Activated T-helper 2 cell treated with anti-CD3 and anti-CD28 coated beads, Interferon-gamma antibody, Interleukin-2, Interleukin-4, amounts not matched to agents 10 μg/mL and 5 μg/mL and 100 μg/mL, durations not matched to agents 14 hours and 24 hours and 36 hours (primary cell): ENCODE measurements at regions of chr4 and their contacts with region 1.

Region 1: DNA sequence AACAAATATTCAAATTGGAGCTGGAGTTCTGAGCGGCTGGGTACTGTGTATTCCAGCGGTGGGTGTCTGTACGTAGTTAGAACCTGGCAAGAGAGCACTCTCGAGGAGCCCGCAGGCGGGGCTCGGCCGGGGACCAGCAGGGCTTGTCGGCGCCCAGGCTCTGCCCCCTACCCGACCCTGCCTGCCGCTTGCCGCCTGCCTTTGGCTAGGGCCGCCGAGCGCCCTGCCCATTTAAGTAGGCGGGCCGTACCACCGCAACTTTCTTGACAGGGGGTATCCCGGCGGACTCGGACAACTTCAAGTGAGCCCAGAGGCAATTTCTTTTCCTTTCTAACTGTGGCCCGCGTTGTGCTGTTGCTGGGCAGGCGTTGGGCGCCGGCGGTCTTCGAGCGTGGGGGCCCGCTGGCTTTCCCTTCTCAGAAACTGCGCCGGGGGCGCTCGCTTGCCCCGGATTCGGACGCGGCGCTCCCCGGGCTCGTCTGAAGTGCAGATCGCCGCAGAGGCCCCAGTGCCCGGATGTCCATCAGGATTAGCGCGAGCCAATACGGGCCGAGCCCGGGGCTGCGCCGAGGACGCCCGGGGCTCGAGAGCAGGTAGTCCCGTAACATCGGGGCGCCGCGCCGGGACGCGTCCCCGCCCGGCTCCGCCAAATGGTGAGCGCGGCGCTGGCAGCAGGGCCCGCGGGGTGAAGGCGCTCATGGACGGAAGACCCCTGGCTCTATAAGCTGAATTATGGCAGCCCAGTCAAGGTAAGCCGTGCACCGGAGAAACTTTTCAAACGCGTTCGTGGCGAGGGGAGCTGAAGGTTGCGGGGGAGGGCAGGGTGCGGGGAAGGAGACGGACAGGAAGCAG is 72.1 kb downstream of the AFF1 start:
- DNase-seq: peak; percentile 89
- H3K4me3 Mint-ChIP-seq: peak overlapping the region; percentile 98
- H3K27ac Mint-ChIP-seq: peak overlapping the region; percentile 97
- H3K4me1 Mint-ChIP-seq: peaks cover 48% of the 10 kb centered on the region
- H3K27me3 Mint-ChIP-seq: no peaks in the 10 kb centered on the region

Region 2: GRCh38 chr4:86934771-86935565 is 71.9 kb before region 1 on chr4 and contains the start of gene AFF1:
- intact Hi-C with region 1: loop called (anchors 1 kb)
- DNase-seq: peak; percentile 85
- H3K4me3 Mint-ChIP-seq: peak within 1 kb of the TSS; percentile 93
- H3K27ac Mint-ChIP-seq: peak within 1 kb of the TSS; percentile 96
- H3K4me1 Mint-ChIP-seq: peaks cover 49% of the 10 kb centered on the region
- H3K27me3 Mint-ChIP-seq: no peaks in the 10 kb centered on the region
- total RNA-seq, gene AFF1: 60.4 and 63.0 TPM in 2 replicates

Region 3: GRCh38 chr4:86977621-86978184 is 29.2 kb before region 1 on chr4:
- intact Hi-C with region 1: loop called (anchors 2 kb)
- DNase-seq: no peak
- H3K4me3 Mint-ChIP-seq: peak overlapping the region; percentile 4
- H3K27ac Mint-ChIP-seq: peak overlapping the region; percentile 73
- H3K4me1 Mint-ChIP-seq: peaks cover 54% of the 10 kb centered on the region
- H3K27me3 Mint-ChIP-seq: no peaks in the 10 kb centered on the region

Region 4: DNA sequence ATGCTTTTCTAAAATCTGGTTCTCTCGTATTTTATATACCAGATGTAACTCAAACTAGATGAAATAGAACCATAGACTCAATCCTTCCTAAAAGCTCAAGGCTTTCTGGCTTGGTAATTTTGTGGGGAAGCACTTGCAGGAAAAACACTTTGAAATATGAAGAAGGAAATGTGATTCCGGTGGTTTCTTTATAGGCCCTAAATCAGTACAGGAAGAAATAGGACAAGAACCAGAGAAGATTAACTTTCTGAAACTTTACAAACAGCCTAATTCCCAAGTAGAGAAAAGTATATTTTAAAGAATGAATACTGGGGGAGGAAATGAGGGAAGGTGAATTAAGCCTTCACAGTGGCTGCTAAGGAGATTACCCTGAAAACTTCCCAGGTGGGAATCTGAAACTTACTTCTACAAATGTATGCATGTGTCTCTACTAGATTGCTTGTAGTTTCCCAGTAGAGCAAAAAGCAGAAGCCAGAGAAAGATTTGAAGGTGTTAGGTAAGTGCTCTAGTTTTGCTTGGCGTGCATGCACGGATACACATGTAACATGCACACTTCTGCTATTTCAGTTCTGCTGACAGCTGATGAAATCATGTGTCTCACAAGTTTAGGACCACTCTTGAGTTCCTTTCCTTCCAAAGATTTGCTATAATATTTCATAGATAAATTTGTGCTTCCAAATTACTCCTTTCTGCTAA is 20.0 kb after region 1 on chr4:
- intact Hi-C with region 1: loop called (anchors 2 kb)
- DNase-seq: no peak
- H3K4me3 Mint-ChIP-seq: no peak overlapping the region
- H3K27ac Mint-ChIP-seq: no peak overlapping the region
- H3K4me1 Mint-ChIP-seq: peaks cover 26% of the 10 kb centered on the region
- H3K27me3 Mint-ChIP-seq: no peaks in the 10 kb centered on the region

Region 5: DNA sequence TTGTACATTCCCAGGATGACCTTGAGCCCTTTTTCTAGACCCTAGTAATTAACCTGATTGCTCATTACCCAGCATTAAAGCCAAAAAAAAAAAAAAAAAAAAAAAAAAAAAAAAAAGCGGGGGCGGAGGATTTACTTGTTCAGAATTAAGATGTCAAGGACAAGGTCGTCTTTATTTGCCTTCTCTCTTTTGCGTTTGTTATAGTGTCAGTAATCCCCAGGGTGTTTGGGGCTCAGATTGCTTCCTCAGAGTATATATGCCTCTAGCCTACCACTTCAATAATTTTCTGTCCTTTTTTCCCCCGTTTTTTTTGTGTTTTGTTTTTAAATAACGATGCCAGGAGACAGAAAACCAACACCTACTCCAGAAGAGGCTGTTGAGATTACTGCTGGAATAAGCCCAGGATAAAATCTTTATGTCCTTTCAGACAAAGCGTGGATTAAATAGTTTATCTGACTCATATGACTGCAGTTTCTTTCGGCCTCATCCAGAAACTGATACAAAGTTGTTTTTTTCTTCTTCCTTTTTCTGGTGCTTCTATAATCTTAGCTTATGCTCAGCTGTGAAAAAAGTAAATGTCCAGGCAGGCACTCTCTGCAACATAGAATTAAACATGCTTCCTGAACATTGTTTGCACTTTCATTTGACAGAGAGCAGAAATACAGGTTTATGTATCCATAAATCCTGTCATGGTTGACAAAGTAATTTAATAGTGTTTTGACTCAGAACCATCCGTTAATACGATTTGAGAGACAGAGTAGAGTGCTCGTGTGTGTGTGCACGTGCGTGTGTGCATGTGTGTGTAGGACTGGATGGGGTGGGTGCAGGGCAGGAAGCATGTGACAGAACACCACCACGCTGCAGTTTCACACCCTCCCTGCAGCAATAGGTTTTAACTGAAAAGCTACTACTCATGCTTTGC is 66.6 kb after region 1 on chr4:
- intact Hi-C with region 1: loop called (anchors 1 kb)
- DNase-seq: peak; percentile 46
- H3K4me3 Mint-ChIP-seq: peak overlapping the region; percentile 74
- H3K27ac Mint-ChIP-seq: peak overlapping the region; percentile 88
- H3K4me1 Mint-ChIP-seq: peaks cover 48% of the 10 kb centered on the region
- H3K27me3 Mint-ChIP-seq: no peaks in the 10 kb centered on the region